ENCODE measurements at regions of chr10 and their contacts with region 1.

Region 1: DNA sequence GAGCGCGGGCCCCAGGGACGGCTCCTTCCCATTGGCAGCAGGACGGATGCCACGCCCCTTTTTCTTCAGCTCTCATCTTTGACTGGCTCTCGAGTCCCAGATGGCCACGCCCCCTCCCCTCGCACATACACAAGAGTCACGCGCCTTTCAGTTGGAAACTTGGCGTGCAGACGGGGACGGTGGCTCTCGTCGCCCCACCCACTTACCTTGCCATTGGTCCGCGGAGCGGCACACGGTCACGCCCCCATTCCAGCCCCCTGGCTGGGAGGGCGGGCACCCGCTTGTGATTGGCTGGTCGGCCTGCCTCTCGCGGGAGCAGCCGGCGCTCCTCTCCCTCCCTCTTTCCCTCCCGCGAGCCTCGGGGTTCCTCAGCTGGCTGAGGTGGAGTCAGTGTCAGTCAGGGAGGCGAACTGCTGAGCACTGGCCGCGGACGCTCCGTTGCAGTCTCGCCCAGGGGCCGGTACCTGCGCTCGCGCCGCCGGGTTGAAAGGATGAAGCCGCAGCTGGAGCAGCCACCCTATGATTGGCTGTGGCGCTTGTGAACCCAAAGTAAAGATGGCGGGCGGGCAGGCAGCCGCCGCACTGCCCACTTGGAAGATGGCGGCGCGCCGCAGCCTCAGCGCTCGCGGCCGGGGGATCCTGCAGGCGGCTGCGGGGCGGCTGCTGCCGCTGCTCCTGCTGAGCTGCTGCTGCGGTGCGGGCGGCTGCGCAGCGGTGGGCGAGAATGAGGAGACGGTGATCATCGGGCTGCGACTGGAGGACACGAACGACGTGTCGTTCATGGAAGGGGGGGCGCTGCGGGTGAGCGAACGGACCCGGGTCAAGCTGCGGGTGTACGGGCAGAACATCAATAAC is at the start of gene CNNM2:
- DNase-seq: peak; percentile 100
- ATAC-seq: peak; percentile 98
- H3K4me3 ChIP-seq: peak within 1 kb of the TSS; percentile 67 to 69
- H3K27ac ChIP-seq: peak within 1 kb of the TSS; percentile 33 to 69
- H3K4me1 ChIP-seq: no peaks in the 10 kb centered on the region
- H3K27me3 ChIP-seq: no peaks in the 10 kb centered on the region
- total RNA-seq, gene CNNM2: 13.3 to 30.8 TPM

Region 2: DNA sequence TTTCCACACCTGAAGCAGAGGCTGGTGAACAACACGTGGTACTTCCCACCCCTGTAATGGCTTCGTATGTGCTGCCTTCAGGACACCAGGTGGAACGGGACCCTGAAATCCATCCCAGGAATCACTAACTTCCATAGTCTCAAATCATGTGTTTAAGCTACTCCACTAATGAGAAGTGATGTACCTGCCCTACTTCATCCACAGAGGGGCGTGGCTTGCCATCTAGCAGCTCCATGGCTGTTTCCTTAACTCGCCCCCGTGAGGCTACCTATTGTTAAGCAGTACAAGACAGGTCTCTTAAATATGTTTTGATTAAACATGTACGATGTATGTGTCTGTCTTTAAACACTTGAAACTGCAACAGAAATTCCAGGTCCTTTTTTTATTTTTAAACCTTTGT is 235.8 kb before region 1 on chr10:
- intact Hi-C with region 1: no loop called
- DNase-seq: no peak
- ATAC-seq: no peak
- H3K4me3 ChIP-seq: no peak overlapping the region
- H3K27ac ChIP-seq: no peak overlapping the region
- H3K4me1 ChIP-seq: no peaks in the 10 kb centered on the region
- H3K27me3 ChIP-seq: no peaks in the 10 kb centered on the region

Region 3: DNA sequence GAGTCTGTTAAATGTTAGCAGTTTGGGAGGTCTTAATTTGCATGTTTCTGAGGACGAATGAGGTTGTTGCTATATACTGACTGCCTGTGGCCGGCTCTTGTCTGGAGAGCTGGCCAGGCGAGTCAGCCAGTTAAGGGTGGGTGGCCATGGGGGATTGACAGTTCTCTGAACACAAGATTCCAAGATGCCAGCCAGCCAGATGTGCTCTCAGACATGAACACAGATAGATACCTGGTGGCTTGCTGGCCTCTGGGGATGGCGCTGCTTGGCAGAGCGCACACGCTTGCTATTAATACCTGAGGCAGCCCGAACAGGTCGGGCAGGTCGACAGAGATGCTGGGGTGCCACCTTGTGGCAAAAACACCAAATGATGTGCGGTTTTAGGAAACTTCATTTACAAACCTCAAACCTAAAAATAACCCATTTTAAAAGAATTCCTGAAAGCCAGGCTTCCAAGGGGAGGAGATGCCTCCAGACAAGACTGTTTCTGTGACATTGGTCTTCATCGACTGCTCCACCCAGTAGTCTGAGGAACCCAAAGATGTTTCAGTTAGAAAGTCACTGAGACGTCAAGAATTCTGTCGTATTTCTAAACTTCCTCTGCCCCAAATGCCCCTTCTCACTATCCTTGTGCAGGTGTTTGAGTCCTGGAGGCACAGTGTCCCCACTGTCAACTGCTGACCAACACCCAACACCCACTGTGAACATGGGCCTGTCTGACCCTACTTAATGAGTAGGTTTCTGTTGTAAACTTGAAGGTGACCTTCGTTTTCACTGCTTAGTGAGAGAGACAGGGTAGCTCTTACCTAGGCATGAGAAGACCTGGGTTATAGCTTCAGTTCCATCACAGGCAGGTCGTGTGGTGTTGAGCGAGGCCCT is 151.5 kb after region 1 on chr10:
- intact Hi-C with region 1: loop called (anchors 1 to 2 kb)
- DNase-seq: peak in 1 of 2 donors; percentile 69
- ATAC-seq: peak; percentile 51
- H3K4me3 ChIP-seq: no peak overlapping the region
- H3K27ac ChIP-seq: no peak overlapping the region
- H3K4me1 ChIP-seq: no peaks in the 10 kb centered on the region
- H3K27me3 ChIP-seq: no peaks in the 10 kb centered on the region

Region 4: GRCh38 chr10:103171278-103171677 is 253.1 kb after region 1 on chr10:
- intact Hi-C with region 1: loop called in 1 of 2 experiments (anchors 10 kb)
- DNase-seq: no peak
- ATAC-seq: no peak
- H3K4me3 ChIP-seq: no peak overlapping the region
- H3K27ac ChIP-seq: no peak overlapping the region
- H3K4me1 ChIP-seq: no peaks in the 10 kb centered on the region
- H3K27me3 ChIP-seq: no peaks in the 10 kb centered on the region

Region 5: GRCh38 chr10:103244663-103245271 is 326.6 kb after region 1 on chr10:
- intact Hi-C with region 1: loop called (anchors 1 to 2 kb)
- DNase-seq: peak; percentile 77 to 81
- ATAC-seq: peak; percentile 91
- H3K4me3 ChIP-seq: no peak overlapping the region
- H3K27ac ChIP-seq: no peak overlapping the region
- H3K4me1 ChIP-seq: peaks cover 0 to 7% of the 10 kb centered on the region in 2 donors
- H3K27me3 ChIP-seq: no peaks in the 10 kb centered on the region

Region 6: GRCh38 chr10:103333925-103334520 is 415.8 kb after region 1 on chr10:
- intact Hi-C with region 1: loop called in 1 of 2 experiments (anchors 10 kb)
- DNase-seq: no peak
- ATAC-seq: no peak
- H3K4me3 ChIP-seq: no peak overlapping the region
- H3K27ac ChIP-seq: no peak overlapping the region
- H3K4me1 ChIP-seq: no peaks in the 10 kb centered on the region
- H3K27me3 ChIP-seq: no peaks in the 10 kb centered on the region

Measured in aorta (tissue), 5 donors.